Endothelial cell of umbilical vein (primary cell): ENCODE measurements at regions of chr15 and their contacts with region 1.

Region 1: DNA sequence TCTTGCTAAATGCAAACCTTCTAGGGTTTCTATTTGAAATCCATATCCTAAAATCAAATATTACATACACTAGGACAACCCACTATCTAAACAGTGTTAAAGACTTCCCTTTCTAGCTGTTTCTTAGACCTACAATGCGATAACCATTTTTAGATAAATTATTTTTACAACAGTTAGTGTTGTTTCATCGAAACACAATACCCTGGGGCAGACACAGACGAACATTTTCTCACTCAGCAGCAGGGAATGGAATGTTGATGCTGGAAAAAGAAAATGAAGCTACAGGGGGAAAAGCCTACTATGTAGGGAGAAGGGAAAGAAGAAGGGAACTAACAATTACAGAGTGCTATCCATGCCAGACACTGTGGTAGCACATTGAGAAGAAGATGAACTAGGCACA is 6.0 kb upstream of the HERC1 start:
- DNase-seq: peak; percentile 65
- H3K4me3 ChIP-seq: no peak overlapping the region
- H3K27ac ChIP-seq: no peak overlapping the region
- H3K4me1 ChIP-seq: peaks cover 45% of the 10 kb centered on the region
- H3K27me3 ChIP-seq: no peaks in the 10 kb centered on the region
- CTCF ChIP-seq: no peak
- POLR2A ChIP-seq: no peak

Region 2: GRCh38 chr15:63626955-63627354 is 212.8 kb before region 1 on chr15:
- CTCF ChIA-PET with region 1: no interaction called
- POLR2A ChIA-PET with region 1: no interaction called
- dilution Hi-C with region 1: no loop called
- intact Hi-C with region 1: no loop called
- DNase-seq: no peak
- H3K4me3 ChIP-seq: no peak overlapping the region
- H3K27ac ChIP-seq: no peak overlapping the region
- H3K4me1 ChIP-seq: no peaks in the 10 kb centered on the region
- H3K27me3 ChIP-seq: no peaks in the 10 kb centered on the region
- CTCF ChIP-seq: no peak
- POLR2A ChIP-seq: no peak

Region 3: GRCh38 chr15:63694184-63694583 is 145.5 kb before region 1 on chr15:
- CTCF ChIA-PET with region 1: no interaction called
- POLR2A ChIA-PET with region 1: no interaction called
- dilution Hi-C with region 1: no loop called
- intact Hi-C with region 1: no loop called
- DNase-seq: no peak
- H3K4me3 ChIP-seq: no peak overlapping the region
- H3K27ac ChIP-seq: no peak overlapping the region
- H3K4me1 ChIP-seq: no peaks in the 10 kb centered on the region
- H3K27me3 ChIP-seq: no peaks in the 10 kb centered on the region
- CTCF ChIP-seq: no peak
- POLR2A ChIP-seq: no peak

Region 4: DNA sequence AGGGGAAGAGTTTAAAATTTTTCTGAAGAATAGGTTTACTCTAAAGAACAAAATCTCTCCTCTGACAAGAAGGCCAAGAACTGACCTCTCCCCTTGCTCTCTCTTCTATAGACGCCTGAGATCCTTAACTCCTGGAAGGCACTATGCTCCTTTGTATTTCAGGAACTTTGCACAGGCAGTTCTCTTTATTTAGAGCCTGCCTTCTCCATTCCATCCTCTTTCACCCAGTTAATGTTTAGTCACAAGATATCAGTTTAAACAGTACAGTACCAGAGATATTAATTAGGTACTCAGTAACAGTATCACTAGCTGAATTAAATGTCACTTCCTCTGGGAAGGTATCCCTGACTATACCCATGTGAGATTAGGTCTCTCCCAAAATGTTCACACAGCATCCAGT is 39.5 kb before region 1 on chr15:
- CTCF ChIA-PET with region 1: no interaction called
- POLR2A ChIA-PET with region 1: no interaction called
- dilution Hi-C with region 1: no loop called
- intact Hi-C with region 1: no loop called
- DNase-seq: no peak
- H3K4me3 ChIP-seq: no peak overlapping the region
- H3K27ac ChIP-seq: no peak overlapping the region
- H3K4me1 ChIP-seq: no peaks in the 10 kb centered on the region
- H3K27me3 ChIP-seq: no peaks in the 10 kb centered on the region
- CTCF ChIP-seq: no peak
- POLR2A ChIP-seq: no peak

Region 5: DNA sequence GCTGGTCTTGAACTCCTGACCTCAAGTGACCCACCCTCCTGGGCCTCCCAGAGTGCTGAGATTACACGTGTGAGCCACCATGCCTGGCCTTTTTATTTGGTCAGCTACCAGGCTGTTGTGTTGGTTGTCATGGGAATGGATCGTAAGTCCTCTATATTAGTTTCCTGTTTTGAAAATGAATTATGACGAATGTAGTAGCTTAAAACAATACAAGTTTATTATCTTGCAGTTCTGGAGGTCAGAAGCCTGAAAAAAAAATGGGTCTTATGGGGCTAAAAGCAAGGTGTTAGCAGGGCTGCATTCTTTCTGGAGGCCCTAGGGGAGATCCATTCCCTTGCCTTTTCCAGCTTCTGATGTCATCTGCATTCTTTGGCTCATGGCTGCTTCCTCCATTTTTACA is 19.2 kb after region 1 on chr15:
- CTCF ChIA-PET with region 1: interaction called, 20 read pairs
- POLR2A ChIA-PET with region 1: no interaction called
- dilution Hi-C with region 1: no loop called
- intact Hi-C with region 1: loop called (anchors 1 kb)
- DNase-seq: peak; percentile 95
- H3K4me3 ChIP-seq: no peak overlapping the region
- H3K27ac ChIP-seq: peak overlapping the region; percentile 90
- H3K4me1 ChIP-seq: peaks cover 28% of the 10 kb centered on the region
- H3K27me3 ChIP-seq: no peaks in the 10 kb centered on the region
- CTCF ChIP-seq: no peak
- POLR2A ChIP-seq: no peak